Activated B cell treated with CpG ODN at 0.5 μM for 24 hours (primary cell): ENCODE measurements at regions of chr21 and their contacts with region 1.

Region 1: DNA sequence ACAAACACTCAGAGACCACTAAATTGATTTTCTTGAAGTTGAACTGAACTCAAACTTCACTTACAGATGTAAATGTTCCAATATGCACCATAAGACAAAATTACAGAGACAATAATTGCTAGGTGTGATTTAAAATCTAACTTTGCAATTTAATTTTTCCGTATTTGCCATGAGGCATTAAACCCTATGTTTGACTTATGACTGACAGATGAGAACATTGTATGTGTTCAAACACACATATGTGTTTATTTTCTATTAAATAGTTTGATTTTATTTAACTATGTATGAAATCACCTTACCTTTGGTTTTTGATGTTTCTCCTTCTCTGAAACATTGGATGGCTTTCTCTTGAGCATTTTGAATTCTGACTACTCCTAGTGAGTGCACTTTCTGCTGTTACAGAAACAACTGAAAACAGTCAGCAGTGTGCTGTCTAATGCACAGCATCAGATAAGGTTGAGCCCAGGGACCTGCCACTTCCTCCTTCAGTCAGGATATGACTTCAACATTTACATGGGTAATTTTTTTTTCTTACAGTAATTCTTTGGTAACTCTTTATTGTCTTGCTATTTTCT is at the start of gene SAMSN1:
- DNase-seq: no peak
- ATAC-seq: peak; percentile 93
- H3K4me3 Mint-ChIP-seq: peak within 1 kb of the TSS; percentile 88
- H3K27ac Mint-ChIP-seq: peak within 1 kb of the TSS; percentile 87
- H3K4me1 Mint-ChIP-seq: peaks cover 64% of the 10 kb centered on the region
- H3K27me3 Mint-ChIP-seq: no peaks in the 10 kb centered on the region
- CTCF ChIP-seq: no peak
- total RNA-seq, gene SAMSN1: 48.7 and 49.7 TPM in 2 replicates

Region 2: GRCh38 chr21:14591882-14592281 is 45.9 kb after region 1 on chr21:
- CTCF ChIA-PET with region 1: no interaction called
- POLR2A ChIA-PET with region 1: no interaction called
- intact Hi-C with region 1: loop called (anchors 2 kb)
- DNase-seq: no peak
- ATAC-seq: no peak
- H3K4me3 Mint-ChIP-seq: no peak overlapping the region
- H3K27ac Mint-ChIP-seq: peak overlapping the region; percentile 65
- H3K4me1 Mint-ChIP-seq: peaks cover 25% of the 10 kb centered on the region
- H3K27me3 Mint-ChIP-seq: no peaks in the 10 kb centered on the region
- CTCF ChIP-seq: no peak

Region 3: DNA sequence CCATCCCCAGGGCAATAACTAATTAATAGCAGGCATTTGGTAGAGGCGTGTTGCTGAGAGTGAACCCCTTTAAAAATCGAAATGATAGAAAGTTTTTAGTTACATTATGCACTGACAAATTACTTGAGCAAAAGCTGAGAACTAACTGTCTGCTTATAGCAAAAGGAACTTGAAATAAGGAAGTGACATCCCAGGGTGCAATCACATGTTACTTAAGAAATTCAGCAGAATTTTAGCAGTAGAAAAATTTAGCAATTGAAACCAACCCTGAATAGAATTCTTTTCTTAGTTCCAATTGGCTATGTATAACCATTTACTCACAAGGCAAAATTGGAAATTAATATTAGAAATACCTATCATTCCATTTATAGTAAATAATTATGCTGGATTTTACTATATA is 139.6 kb after region 1 on chr21:
- CTCF ChIA-PET with region 1: no interaction called
- POLR2A ChIA-PET with region 1: no interaction called
- intact Hi-C with region 1: no loop called
- DNase-seq: no peak
- ATAC-seq: peak; percentile 22
- H3K4me3 Mint-ChIP-seq: peak overlapping the region; percentile 58
- H3K27ac Mint-ChIP-seq: peak overlapping the region; percentile 82
- H3K4me1 Mint-ChIP-seq: peaks cover 76% of the 10 kb centered on the region
- H3K27me3 Mint-ChIP-seq: no peaks in the 10 kb centered on the region
- CTCF ChIP-seq: no peak